HCT116 (cell line): ENCODE measurements at regions of chr9 and their contacts with region 1.

Region 1: DNA sequence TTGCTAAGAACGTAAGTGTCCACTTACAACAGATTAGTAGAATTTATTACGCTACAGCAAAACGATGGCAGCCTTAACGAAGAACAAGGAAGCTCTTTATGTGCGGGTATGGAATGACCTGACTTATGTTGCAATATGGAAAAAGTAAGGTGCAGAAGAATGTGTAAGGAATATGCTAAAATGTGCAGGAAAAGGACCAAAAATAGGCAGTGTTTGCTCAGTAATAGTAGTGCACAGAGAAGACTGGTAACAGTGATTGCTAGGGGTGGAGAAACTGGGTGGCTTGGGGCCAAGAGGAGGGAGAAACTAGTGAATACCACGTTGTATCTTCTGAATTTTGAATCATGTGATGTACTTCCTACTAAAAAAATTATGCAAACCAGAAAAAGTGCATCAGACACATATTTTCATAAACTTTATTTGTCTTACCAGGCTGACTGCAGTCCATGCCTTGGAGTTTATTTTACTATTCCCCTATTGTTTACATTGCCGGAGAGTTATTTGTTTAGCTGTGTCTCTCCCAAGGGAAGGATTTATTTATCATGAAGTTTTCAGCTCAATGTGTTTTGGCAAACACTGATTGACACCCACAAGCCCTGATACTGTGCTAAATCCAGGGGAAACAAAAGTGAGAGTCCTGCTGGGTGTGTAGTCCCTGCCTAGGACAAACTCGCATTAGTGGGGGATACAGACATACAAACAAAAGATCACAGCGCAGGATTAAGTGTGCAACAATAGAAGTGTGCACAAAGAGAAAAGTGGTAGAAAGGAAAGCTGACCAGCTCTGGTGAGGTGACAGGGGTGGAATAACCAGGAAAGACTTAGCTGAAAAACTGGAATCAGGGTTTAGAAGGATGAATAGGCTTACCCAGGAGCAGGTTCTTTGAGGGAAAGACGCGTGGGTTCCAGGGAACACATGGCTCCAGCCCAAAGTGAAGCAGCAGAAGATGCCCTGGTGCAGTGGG is 34.0 kb upstream of the ZNF484 start:
- DNase-seq: no peak
- ATAC-seq: no peak
- H3K4me3 ChIP-seq: no peak overlapping the region
- H3K27ac ChIP-seq: no peak overlapping the region
- H3K4me1 ChIP-seq: no peaks in the 10 kb centered on the region
- H3K27me3 ChIP-seq: peaks cover 11% of the 10 kb centered on the region; the same call in 1 of the 2 replicates
- CTCF ChIP-seq: no peak
- POLR2A ChIP-seq: no peak
- RAD21 ChIP-seq: no peak

Region 2: DNA sequence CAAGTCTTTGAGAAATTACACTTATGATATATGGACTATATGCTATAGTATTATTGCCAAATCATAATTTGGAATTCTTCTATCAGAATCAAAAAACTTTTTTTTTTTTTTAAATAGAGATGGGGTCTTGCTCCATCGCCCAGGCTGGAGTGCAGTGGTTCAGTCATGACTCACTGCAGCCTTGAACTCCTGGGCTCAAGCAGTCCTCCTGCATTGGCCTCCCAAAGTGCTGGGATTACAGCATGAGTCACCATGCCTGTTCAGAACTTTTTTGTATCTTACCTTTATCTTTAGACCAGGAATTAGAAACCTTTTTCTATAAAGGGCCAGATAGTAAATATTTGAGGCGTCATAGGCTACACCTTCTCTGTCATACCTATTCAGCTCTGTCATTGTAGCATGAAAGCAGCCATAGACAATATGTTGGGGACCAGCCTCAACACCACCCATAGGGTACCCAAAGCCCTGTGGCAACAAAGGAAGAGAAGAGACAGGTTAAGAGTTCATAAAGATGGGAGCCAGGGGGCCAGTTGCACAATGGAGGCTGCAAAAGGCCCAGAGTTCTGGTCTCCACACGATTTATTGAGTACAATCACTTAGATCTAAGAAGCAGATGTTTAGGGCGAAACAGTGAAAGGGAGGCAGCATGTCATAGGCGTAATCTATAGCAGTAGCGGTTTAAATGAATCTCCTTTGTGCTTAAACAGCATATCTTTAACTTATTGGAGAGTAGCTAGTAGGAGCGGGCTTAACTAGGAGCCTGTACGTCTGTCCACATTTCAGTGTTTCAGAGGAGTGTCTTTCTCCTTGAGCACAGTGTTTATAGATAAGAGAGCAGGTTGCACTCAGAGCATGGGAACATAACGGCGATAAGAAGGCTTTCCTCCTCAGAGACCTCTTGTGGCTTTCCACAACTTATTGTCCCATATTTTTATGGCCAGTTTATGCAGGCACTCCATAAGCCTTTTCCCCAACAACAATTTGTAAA is 388.5 kb before region 1 on chr9:
- CTCF ChIA-PET with region 1: no interaction called
- POLR2A ChIA-PET with region 1: no interaction called
- RAD21 ChIA-PET with region 1: no interaction called
- intact Hi-C with region 1: no loop called
- DNase-seq: no peak
- ATAC-seq: no peak
- H3K4me3 ChIP-seq: no peak overlapping the region
- H3K27ac ChIP-seq: no peak overlapping the region
- H3K4me1 ChIP-seq: no peaks in the 10 kb centered on the region
- H3K27me3 ChIP-seq: no peaks in the 10 kb centered on the region
- CTCF ChIP-seq: no peak
- POLR2A ChIP-seq: no peak
- RAD21 ChIP-seq: no peak

Region 3: GRCh38 chr9:92846662-92847145 is 65.1 kb before region 1 on chr9:
- CTCF ChIA-PET with region 1: no interaction called
- POLR2A ChIA-PET with region 1: no interaction called
- RAD21 ChIA-PET with region 1: no interaction called
- intact Hi-C with region 1: loop called (anchors 10 kb)
- DNase-seq: no peak
- ATAC-seq: no peak
- H3K4me3 ChIP-seq: no peak overlapping the region
- H3K27ac ChIP-seq: no peak overlapping the region
- H3K4me1 ChIP-seq: no peaks in the 10 kb centered on the region
- H3K27me3 ChIP-seq: no peaks in the 10 kb centered on the region
- CTCF ChIP-seq: no peak
- POLR2A ChIP-seq: no peak
- RAD21 ChIP-seq: no peak

Region 4: GRCh38 chr9:93003552-93004407 is 92.0 kb after region 1 on chr9:
- CTCF ChIA-PET with region 1: no interaction called
- POLR2A ChIA-PET with region 1: no interaction called
- RAD21 ChIA-PET with region 1: no interaction called
- intact Hi-C with region 1: no loop called
- DNase-seq: peak; percentile 73
- ATAC-seq: peak; percentile 94
- H3K4me3 ChIP-seq: peak overlapping the region; percentile 49 to 60
- H3K27ac ChIP-seq: peak overlapping the region; percentile 47; the same call in 1 of the 2 replicates
- H3K4me1 ChIP-seq: peaks cover 10 to 18% of the 10 kb centered on the region in 2 experiments; a peak in 3 of 4 replicates
- H3K27me3 ChIP-seq: no peaks in the 10 kb centered on the region
- CTCF ChIP-seq: peak; percentile 67 to 97 (median 82)
- POLR2A ChIP-seq: no peak
- RAD21 ChIP-seq: peak; percentile 94